Caco-2 (cell line): ENCODE measurements at regions of chr16 and their contacts with region 1.

Region 1: GRCh38 chr16:67660564-67661028 is at the start of gene PARD6A:
- DNase-seq: peak; percentile 96 to 97
- H3K4me3 ChIP-seq: peak within 1 kb of the TSS; percentile 52
- H3K4me3 Mint-ChIP-seq: peak within 1 kb of the TSS; percentile 96
- H3K27ac Mint-ChIP-seq: peak within 1 kb of the TSS; percentile 96
- H3K4me1 ChIP-seq: peaks cover 12% of the 10 kb centered on the region
- H3K4me1 Mint-ChIP-seq: no peaks in the 10 kb centered on the region
- H3K27me3 ChIP-seq: no peaks in the 10 kb centered on the region
- H3K27me3 Mint-ChIP-seq: no peaks in the 10 kb centered on the region
- CTCF ChIP-seq: no peak
- total RNA-seq, gene PARD6A: 7.1 and 8.4 TPM in 2 replicates

Region 2: GRCh38 chr16:67415872-67416793 is 244.5 kb before region 1 on chr16 and contains the start of gene ZDHHC1:
- CTCF ChIA-PET with region 1: no interaction called
- POLR2A ChIA-PET with region 1: no interaction called
- intact Hi-C with region 1: no loop called
- DNase-seq: no peak
- H3K4me3 ChIP-seq: no peak within 1 kb of the TSS
- H3K4me3 Mint-ChIP-seq: no peak within 1 kb of the TSS
- H3K27ac Mint-ChIP-seq: peak within 1 kb of the TSS; percentile 59
- H3K4me1 ChIP-seq: peaks cover 44% of the 10 kb centered on the region
- H3K4me1 Mint-ChIP-seq: peaks cover 46% of the 10 kb centered on the region
- H3K27me3 ChIP-seq: no peaks in the 10 kb centered on the region
- H3K27me3 Mint-ChIP-seq: no peaks in the 10 kb centered on the region
- CTCF ChIP-seq: no peak
- total RNA-seq, gene ZDHHC1: 1.0 and 1.3 TPM in 2 replicates

Region 3: DNA sequence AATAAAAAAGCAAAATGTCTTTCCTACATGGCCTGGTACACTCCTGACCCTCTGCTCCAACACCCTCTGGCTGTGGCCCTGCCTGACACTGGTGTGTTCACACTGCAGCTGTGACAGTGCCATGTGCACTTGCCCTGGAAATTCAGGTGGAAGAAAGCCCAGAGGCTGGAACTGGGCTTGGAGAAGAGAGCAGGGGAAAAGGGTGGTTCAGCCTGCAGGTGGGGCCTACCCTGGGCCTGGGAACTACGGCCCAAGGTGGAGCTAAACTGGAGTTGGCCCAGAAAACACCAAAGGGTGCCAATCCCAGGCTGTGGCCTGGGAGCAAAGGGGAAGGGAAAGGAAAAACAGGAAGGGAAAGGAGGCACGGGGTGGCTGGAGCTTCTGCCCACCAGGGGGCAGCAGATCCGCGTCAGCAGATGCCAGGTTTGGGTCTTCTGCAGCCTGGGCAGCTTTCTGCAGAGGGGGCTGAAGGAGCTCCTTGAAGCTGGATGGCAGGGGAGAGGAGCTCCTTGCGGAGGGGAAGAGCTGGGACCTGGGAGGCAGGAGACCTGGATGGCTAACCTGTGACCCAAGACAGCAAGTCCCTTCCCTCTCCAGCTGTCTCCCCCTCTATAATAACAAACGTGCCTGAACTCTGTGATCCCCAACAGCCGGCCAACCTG is 113.7 kb before region 1 on chr16:
- CTCF ChIA-PET with region 1: interaction called, 14 read pairs
- POLR2A ChIA-PET with region 1: no interaction called
- intact Hi-C with region 1: no loop called
- DNase-seq: peak; percentile 78 to 90
- H3K4me3 ChIP-seq: no peak overlapping the region
- H3K4me3 Mint-ChIP-seq: no peak overlapping the region
- H3K27ac Mint-ChIP-seq: peak overlapping the region; percentile 68
- H3K4me1 ChIP-seq: no peaks in the 10 kb centered on the region
- H3K4me1 Mint-ChIP-seq: peaks cover 5% of the 10 kb centered on the region
- H3K27me3 ChIP-seq: no peaks in the 10 kb centered on the region; the same call in 1 of the 2 replicates
- H3K27me3 Mint-ChIP-seq: no peaks in the 10 kb centered on the region
- CTCF ChIP-seq: peak; percentile 95 to 98

Region 4: DNA sequence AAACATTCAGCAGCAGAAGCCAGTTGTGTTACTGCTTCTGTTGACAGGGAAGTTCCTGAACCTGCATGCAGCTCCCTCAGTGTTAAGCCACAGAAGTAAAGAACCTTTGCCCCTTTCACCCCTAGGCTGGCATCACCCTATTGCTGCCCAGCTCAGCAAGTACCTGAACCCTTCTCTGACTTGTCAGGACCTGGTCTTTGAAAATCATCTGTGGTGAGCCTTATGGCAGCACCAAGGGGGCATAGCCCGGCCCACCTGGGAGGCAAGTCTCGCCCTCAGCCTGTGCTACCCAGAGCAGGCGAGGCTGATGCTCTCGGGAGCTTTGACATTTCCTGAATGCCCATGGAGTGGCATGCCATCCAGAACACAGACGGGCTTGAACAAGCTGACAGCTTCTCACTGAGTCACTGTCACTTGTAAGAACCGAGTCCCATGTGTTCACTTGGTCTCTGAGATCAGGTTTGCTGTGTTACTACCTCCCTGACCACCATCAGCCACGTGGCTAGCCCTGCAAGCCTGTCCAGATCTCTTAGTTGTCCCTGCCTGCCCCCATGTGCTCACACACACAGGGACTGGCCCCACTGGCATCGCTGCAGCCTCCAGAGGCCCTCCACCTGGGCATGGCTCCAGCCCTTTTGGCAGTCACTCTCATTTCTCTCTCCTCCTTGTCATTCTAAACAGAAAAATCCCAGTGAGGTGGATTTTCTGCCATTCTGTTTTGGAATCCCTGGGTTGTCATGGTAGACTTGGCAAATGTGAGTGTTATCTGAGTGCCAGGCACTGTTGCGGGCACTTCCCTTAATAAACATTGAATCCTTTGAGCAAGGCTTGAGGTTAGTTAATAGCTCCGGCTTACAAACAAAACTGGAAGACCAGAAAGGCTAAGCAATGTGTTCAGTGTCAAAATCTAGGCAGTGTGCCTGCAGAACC is 18.6 kb before region 1 on chr16:
- CTCF ChIA-PET with region 1: interaction called, 10 read pairs
- POLR2A ChIA-PET with region 1: interaction called, 3 read pairs
- intact Hi-C with region 1: no loop called
- DNase-seq: no peak
- H3K4me3 ChIP-seq: no peak overlapping the region
- H3K4me3 Mint-ChIP-seq: no peak overlapping the region
- H3K27ac Mint-ChIP-seq: no peak overlapping the region
- H3K4me1 ChIP-seq: peaks cover 4% of the 10 kb centered on the region; the same call in 1 of the 2 replicates
- H3K4me1 Mint-ChIP-seq: no peaks in the 10 kb centered on the region
- H3K27me3 ChIP-seq: no peaks in the 10 kb centered on the region
- H3K27me3 Mint-ChIP-seq: no peaks in the 10 kb centered on the region
- CTCF ChIP-seq: no peak

Region 5: GRCh38 chr16:67806428-67807147 is 146.0 kb after region 1 on chr16 and contains the starts of genes RANBP10 and TSNAXIP1:
- CTCF ChIA-PET with region 1: interaction called, 4 read pairs
- POLR2A ChIA-PET with region 1: interaction called, 14 read pairs
- intact Hi-C with region 1: no loop called
- DNase-seq: peak; percentile 99
- H3K4me3 ChIP-seq: peak within 1 kb of the TSS; percentile 88
- H3K4me3 Mint-ChIP-seq: peak within 1 kb of the TSS; percentile 83
- H3K27ac Mint-ChIP-seq: peak within 1 kb of the TSS; percentile 81
- H3K4me1 ChIP-seq: peaks cover 10% of the 10 kb centered on the region; the same call in 1 of the 2 replicates
- H3K4me1 Mint-ChIP-seq: peaks cover 9% of the 10 kb centered on the region
- H3K27me3 ChIP-seq: no peaks in the 10 kb centered on the region
- H3K27me3 Mint-ChIP-seq: no peaks in the 10 kb centered on the region
- CTCF ChIP-seq: no peak
- total RNA-seq, gene RANBP10: 21.8 and 23.8 TPM in 2 replicates
- total RNA-seq, gene TSNAXIP1: 0.84 and 0.91 TPM in 2 replicates

Region 6: GRCh38 chr16:67822511-67822910 is 161.9 kb after region 1 on chr16:
- CTCF ChIA-PET with region 1: no interaction called
- POLR2A ChIA-PET with region 1: no interaction called
- intact Hi-C with region 1: no loop called
- DNase-seq: no peak
- H3K4me3 ChIP-seq: no peak overlapping the region
- H3K4me3 Mint-ChIP-seq: no peak overlapping the region
- H3K27ac Mint-ChIP-seq: no peak overlapping the region
- H3K4me1 ChIP-seq: no peaks in the 10 kb centered on the region
- H3K4me1 Mint-ChIP-seq: no peaks in the 10 kb centered on the region
- H3K27me3 ChIP-seq: no peaks in the 10 kb centered on the region
- H3K27me3 Mint-ChIP-seq: no peaks in the 10 kb centered on the region
- CTCF ChIP-seq: no peak